AG04450 (cell line): ENCODE measurements at regions of chr10 and their contacts with region 1.

Region 1: GRCh38 chr10:122980209-122981065 is at the start of gene PSTK:
- DNase-seq: peak; percentile 79
- H3K4me3 ChIP-seq: peak within 1 kb of the TSS; percentile 88
- H3K27ac ChIP-seq: peak within 1 kb of the TSS; percentile 93
- H3K27me3 ChIP-seq: no peaks in the 10 kb centered on the region
- CTCF ChIP-seq: peak; percentile 94
- polyA plus RNA-seq, gene PSTK: 4.8 and 5.1 TPM in 2 replicates

Region 2: GRCh38 chr10:122953827-122954730 is 26.4 kb before region 1 on chr10 and contains the start of gene C10orf88:
- CTCF ChIA-PET with region 1: interaction called, 19 read pairs
- POLR2A ChIA-PET with region 1: interaction called, 8 read pairs
- DNase-seq: peak; percentile 99
- H3K4me3 ChIP-seq: peak within 1 kb of the TSS; percentile 82
- H3K27ac ChIP-seq: peak within 1 kb of the TSS; percentile 77
- H3K27me3 ChIP-seq: no peaks in the 10 kb centered on the region
- CTCF ChIP-seq: 0 out of 2 replicates have a peak, but pooled peaks have one; percentile 5
- polyA plus RNA-seq, gene C10orf88: 7.5 and 8.6 TPM in 2 replicates

Region 3: DNA sequence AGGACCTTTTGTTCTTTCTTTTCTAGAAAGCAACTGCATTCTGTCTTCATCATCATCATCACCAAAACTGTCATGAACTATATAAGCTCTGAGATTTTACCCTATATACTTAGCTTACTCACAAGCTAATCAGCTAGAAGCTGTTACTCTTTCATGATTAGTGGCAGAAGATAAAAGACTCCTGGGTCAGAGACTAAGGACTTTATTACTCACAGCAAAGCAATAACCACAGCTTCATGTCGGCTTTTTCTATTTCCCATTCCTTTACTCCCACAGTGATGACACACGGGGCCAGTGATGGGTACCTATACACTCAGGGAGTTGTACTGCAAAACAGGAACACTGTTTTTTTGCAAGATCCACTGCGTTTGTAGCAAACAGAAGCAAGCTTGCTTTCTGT is 18.0 kb before region 1 on chr10:
- CTCF ChIA-PET with region 1: interaction called, 11 read pairs
- POLR2A ChIA-PET with region 1: no interaction called
- DNase-seq: no peak
- H3K4me3 ChIP-seq: no peak overlapping the region
- H3K27ac ChIP-seq: no peak overlapping the region
- H3K27me3 ChIP-seq: no peaks in the 10 kb centered on the region
- CTCF ChIP-seq: no peak

Region 4: GRCh38 chr10:122999347-122999746 is 18.9 kb after region 1 on chr10:
- CTCF ChIA-PET with region 1: interaction called, 39 read pairs
- POLR2A ChIA-PET with region 1: no interaction called
- DNase-seq: no peak
- H3K4me3 ChIP-seq: no peak overlapping the region
- H3K27ac ChIP-seq: no peak overlapping the region
- H3K27me3 ChIP-seq: no peaks in the 10 kb centered on the region
- CTCF ChIP-seq: no peak

Region 5: DNA sequence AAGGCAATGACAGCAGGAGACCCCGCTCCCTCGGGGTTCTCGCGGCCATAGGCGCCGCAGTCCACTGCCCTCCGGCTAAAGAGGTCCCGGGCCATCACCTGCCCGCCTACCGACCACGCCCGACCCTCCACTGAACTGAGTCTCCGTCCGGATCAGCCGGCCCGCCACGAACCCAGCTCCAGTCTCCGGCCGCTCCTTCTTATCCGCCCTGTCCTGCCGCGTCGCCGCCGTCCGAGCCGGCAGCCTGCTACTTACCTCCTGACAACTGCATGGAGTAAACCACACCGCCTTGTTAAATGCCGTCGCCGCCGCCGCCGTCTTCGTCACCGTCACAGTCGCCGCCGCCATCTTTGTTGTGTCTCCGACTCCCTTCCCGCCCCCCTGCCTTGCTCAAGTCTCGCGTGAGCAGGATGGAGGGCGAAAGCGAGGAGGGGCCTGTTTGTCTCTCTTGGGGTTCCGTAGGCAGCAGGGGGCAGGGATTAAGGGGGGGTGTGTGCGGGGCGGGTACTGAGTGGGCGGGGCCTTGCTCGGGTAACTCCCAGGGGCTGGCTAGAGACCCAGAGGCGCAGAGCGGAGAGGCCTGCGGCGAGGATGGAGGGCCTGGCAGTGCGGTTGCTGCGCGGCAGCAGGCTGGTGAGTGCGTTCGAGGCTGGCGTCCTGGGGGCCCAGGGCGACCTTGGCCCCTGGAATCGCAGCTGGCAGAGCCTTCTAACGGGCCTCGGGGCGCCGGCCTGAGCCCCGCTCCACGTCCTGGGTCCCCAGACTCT is 28.2 kb after region 1 on chr10 and contains the starts of genes ACADSB and IKZF5:
- CTCF ChIA-PET with region 1: interaction called, 24 read pairs
- POLR2A ChIA-PET with region 1: interaction called, 3 read pairs
- DNase-seq: peak; percentile 95
- H3K4me3 ChIP-seq: peak within 1 kb of the TSS; percentile 91
- H3K27ac ChIP-seq: peak within 1 kb of the TSS; percentile 73
- H3K27me3 ChIP-seq: no peaks in the 10 kb centered on the region
- CTCF ChIP-seq: no peak
- polyA plus RNA-seq, gene ACADSB: 12.5 and 16.1 TPM in 2 replicates
- polyA plus RNA-seq, gene IKZF5: 6.6 and 7.8 TPM in 2 replicates

Region 6: GRCh38 chr10:123236122-123236521 is 255.7 kb after region 1 on chr10:
- CTCF ChIA-PET with region 1: no interaction called
- POLR2A ChIA-PET with region 1: no interaction called
- DNase-seq: no peak
- H3K4me3 ChIP-seq: no peak overlapping the region
- H3K27ac ChIP-seq: no peak overlapping the region
- H3K27me3 ChIP-seq: no peaks in the 10 kb centered on the region
- CTCF ChIP-seq: no peak